ENCODE measurements at regions of chr9 and their contacts with region 1.

Region 1: DNA sequence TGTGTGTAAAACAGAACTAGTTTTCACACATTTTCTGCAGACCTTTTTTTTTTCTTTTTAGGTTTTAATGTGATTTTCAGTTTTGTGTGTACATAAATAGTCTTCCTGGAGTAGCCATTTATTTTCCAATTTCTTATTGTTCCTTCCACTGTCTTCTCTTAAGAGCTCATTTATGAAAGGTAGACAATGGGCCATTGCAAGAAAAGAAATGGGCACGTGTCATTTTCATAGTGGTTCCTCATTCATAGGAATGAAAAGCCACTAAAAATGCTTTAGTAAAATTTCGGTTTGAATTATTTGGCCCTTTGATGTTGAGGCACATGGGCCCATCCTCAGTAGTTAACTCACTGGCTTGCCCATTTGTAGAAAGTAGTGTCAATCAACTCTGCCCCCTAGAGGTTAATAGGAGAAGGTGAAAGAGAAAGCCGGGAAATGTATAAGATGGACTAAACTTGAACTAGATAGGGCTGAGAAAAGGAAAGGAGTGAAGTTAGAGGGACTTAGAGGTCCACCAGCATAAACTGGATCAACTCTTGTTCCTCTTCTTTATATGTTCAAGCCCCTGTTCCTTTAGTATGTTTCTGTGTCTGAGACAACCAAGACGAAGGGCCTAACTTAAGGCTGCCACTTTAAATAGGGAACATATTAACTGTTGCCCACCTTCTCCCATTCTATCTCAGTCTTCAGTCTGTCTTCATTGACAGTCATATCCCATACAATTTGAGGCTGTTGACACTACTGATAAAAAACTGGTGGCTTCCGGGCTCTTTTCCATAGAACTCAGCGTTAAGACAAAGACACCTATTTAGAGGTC is 72.6 kb downstream of the SMARCA2 start:
- DNase-seq: no peak
- ATAC-seq: peak; percentile 49 to 82 (median 68)
- H3K4me3 ChIP-seq: no peak overlapping the region
- H3K27ac ChIP-seq: no peak overlapping the region
- H3K4me1 ChIP-seq: no peaks in the 10 kb centered on the region
- H3K27me3 ChIP-seq: no peaks in the 10 kb centered on the region
- CTCF ChIP-seq: peak; percentile 51

Region 2: GRCh38 chr9:2024888-2025782 is 62.6 kb before region 1 on chr9:
- intact Hi-C with region 1: no loop called
- DNase-seq: no peak
- ATAC-seq: peak in 3 of 4 donors; percentile 21 to 31 (median 25)
- H3K4me3 ChIP-seq: no peak overlapping the region
- H3K27ac ChIP-seq: peak overlapping the region; percentile 14
- H3K4me1 ChIP-seq: peaks cover 89% of the 10 kb centered on the region
- H3K27me3 ChIP-seq: no peaks in the 10 kb centered on the region
- CTCF ChIP-seq: no peak

Region 3: GRCh38 chr9:2072752-2073405 is 14.8 kb before region 1 on chr9:
- intact Hi-C with region 1: no loop called
- DNase-seq: no peak
- ATAC-seq: no peak
- H3K4me3 ChIP-seq: no peak overlapping the region
- H3K27ac ChIP-seq: no peak overlapping the region
- H3K4me1 ChIP-seq: no peaks in the 10 kb centered on the region
- H3K27me3 ChIP-seq: no peaks in the 10 kb centered on the region
- CTCF ChIP-seq: no peak

Region 4: GRCh38 chr9:2837915-2838314 is 750.2 kb after region 1 on chr9:
- intact Hi-C with region 1: loop called in 1 of 2 experiments (anchors 10 kb)
- DNase-seq: no peak
- ATAC-seq: peak in 1 of 4 donors; percentile 61
- H3K4me3 ChIP-seq: peak overlapping the region; percentile 26
- H3K27ac ChIP-seq: peak overlapping the region; percentile 24
- H3K4me1 ChIP-seq: peaks cover 49% of the 10 kb centered on the region
- H3K27me3 ChIP-seq: no peaks in the 10 kb centered on the region
- CTCF ChIP-seq: peak; percentile 27

Measured in psoas muscle (tissue), 8 donors.